ENCODE measurements at regions of chr6 and their contacts with region 1.

Region 1: DNA sequence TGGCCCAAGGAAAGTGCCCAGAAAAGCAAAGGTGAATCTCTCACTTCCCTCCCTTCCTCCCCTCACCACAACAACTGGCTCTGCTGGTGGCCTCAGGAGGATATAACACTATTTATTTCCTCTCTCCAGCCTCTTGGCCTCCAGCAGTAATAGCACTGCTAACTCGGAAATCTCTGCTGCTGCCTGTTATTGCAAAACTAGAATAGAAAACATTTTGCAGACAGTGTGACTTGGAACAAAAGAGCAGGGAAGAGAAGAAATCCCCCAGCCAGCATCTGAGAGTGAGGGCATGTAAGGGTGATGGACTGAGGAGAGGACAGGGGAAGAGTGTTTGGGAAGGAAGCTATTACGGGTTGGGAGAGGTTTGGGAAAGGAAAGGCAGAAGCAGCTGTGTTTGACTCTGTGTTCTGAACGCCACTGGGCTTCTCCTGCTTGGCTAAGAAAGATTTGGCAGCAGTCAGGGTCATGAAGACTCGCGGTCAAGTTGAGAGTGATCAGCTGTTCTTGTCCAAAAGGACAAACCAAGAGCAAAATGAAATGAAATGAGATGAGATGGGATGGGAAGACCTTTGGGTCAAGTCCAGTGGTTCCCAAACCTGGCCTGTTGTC is 81.0 kb upstream of the SNX9 start:
- DNase-seq: no peak
- H3K4me3 ChIP-seq: no peak overlapping the region
- H3K27ac ChIP-seq: peak overlapping the region in 1 of 2 donors; percentile 77
- H3K4me1 ChIP-seq: no peaks in the 10 kb centered on the region
- H3K27me3 ChIP-seq: no peaks in the 10 kb centered on the region
- CTCF ChIP-seq: no peak
- POLR2A ChIP-seq: no peak

Region 2: DNA sequence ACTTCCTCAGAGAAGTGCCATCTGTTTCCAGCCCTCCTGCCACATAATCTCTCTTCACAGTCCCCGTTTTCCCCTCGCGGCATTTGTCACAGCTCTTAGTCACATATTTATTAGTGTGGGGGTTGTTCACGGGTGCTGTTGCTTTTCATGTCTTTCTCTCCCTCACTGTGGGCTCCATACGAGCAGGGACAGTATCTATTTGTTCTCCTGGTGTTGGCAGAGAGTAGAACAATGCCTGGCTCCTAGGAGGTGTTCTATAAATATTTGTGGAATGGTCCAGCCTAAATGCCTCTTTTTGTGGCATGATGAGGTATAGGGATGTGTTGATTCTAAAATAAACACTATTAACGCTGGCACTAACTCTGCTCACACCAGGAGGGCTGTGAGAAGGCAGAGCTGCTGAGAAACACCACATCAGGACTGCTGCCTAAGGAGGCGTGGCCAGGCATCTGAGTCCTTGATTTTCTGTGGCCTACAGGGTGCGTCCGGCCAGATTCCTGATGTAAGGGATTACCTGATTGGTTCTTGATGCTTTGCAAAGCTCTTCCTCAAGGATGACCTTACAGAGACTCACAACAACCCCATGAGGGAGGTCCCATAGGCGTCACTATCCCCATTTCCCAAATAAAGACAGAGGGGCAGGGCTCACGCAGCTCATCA is 1184.7 kb before region 1 on chr6:
- intact Hi-C with region 1: loop called (anchors 5 kb)
- DNase-seq: no peak
- H3K4me3 ChIP-seq: no peak overlapping the region
- H3K27ac ChIP-seq: no peak overlapping the region
- H3K4me1 ChIP-seq: no peaks in the 10 kb centered on the region
- H3K27me3 ChIP-seq: no peaks in the 10 kb centered on the region
- CTCF ChIP-seq: no peak
- POLR2A ChIP-seq: no peak

Measured in breast epithelium (tissue), 4 donors.